AG04449 (cell line): ENCODE measurements at regions of chr1 and their contacts with region 1.

Region 1: GRCh38 chr1:84433258-84434080 is 35.2 kb downstream of the DNASE2B start:
- DNase-seq: peak; percentile 16
- H3K4me3 ChIP-seq: no peak overlapping the region; the same call in 1 of the 2 replicates
- CTCF ChIP-seq: peak; percentile 62

Region 2: DNA sequence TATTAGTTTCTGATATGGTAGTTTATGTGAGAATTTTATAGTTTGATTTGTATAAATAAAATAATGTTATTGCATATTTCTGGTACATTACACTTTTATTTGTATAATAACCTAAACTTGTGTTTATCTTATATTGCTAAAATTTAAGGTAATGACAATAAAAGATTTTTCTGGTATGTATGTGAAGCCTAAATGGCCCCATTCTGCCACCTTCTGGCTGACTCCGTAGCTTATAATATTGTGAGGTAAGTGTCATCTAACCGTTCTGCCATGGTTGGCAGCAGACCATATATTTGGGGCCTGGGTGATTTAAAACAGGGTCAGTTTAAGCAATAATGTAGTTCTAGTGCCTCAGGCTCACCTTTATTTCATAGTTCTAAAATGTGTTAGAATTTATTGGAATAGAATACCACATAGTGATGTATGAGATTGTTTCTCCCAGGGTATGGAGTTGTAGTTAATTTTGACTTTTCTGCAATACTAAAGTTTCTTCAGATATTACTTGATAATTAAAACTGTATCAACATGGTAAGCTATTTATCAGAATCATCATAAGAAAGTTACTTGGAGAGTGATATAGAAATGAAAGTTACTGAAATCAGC is 310.6 kb before region 1 on chr1:
- CTCF ChIA-PET with region 1: interaction called, 41 read pairs
- POLR2A ChIA-PET with region 1: no interaction called
- DNase-seq: no peak
- H3K4me3 ChIP-seq: no peak overlapping the region
- CTCF ChIP-seq: peak; percentile 58

Region 3: GRCh38 chr1:84353695-84354094 is 79.8 kb before region 1 on chr1:
- CTCF ChIA-PET with region 1: no interaction called
- POLR2A ChIA-PET with region 1: no interaction called
- DNase-seq: no peak
- H3K4me3 ChIP-seq: no peak overlapping the region
- CTCF ChIP-seq: no peak

Region 4: DNA sequence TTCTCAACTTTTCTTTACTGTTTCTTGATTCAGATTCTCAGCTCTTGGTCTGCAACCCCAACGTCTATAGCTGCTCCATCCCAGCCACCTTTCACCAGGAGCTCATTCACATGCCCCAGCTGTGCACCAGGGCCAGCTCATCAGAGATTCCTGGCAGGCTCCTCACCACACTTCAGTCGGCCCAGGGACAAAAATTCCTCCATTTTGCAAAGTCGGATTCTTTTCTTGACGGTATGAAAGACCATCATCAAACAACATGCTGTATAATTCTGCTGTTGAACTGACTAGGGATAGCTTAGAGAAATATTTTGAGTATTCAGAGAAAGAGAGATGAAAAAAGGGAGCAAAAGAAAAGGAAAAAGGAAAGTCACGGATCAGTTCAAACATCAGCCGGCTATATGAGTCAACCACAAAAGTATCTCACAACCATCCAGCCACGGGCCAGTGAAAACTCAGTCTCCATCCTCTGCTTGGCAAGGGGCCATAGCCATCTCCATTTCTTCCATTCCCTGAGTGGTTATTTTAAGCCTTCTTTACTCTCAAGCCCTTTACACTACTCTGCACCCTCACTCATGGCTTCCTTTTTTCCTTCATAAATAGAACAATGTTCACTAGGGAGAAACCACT is 21.0 kb before region 1 on chr1:
- CTCF ChIA-PET with region 1: interaction called, 11 read pairs
- POLR2A ChIA-PET with region 1: no interaction called
- DNase-seq: peak; percentile 14
- H3K4me3 ChIP-seq: no peak overlapping the region
- CTCF ChIP-seq: no peak

Region 5: GRCh38 chr1:84476225-84476624 is 42.8 kb after region 1 on chr1:
- CTCF ChIA-PET with region 1: no interaction called
- POLR2A ChIA-PET with region 1: no interaction called
- DNase-seq: no peak
- H3K4me3 ChIP-seq: no peak overlapping the region
- CTCF ChIP-seq: no peak

Region 6: DNA sequence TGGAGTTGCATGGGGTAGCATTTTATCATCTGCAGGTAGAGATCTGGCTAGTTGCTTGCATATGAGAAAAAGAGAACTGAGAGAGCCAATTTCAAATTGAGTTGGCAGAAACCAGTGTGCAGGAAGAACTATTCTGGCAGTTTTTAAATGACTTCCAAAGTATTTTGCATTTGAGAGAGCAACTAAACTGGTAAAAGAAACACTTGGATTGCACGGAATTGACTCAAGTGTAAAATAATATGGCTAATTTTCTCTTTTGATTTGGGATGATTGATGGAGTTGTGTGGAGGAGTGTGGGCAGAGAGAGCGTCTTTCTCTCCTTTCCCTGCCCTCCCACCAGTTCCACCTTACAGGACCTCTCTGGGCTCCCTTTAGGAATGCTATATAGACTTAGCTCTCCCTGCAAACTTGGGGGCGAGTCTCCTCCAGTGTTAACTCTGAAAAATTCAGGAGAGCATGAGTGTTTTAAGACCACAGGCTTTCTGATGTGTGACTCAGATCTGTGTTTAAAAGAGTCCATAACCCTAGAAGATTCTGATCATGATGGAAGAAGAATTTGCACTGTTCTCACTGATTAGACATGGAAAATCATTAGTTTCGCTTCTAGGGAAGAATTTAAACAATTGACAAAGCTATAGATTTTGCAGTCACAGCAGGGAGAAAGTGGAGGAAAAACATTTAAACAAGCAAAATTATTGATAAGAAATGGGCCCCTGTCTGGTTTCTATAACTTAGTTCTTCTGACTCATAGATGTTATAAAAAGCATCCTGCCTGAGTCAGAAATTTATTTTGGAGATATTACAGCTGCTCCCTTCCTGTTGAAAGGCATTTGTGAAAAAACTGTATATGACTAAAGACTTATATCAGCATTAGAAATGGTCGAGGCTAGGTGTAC is 165.6 kb after region 1 on chr1:
- CTCF ChIA-PET with region 1: interaction called, 188 read pairs
- POLR2A ChIA-PET with region 1: no interaction called
- DNase-seq: no peak
- H3K4me3 ChIP-seq: peak overlapping the region; percentile 28
- CTCF ChIP-seq: no peak

Region 7: GRCh38 chr1:84613887-84614286 is 180.4 kb after region 1 on chr1:
- CTCF ChIA-PET with region 1: no interaction called
- POLR2A ChIA-PET with region 1: no interaction called
- DNase-seq: no peak
- H3K4me3 ChIP-seq: no peak overlapping the region
- CTCF ChIP-seq: no peak

Region 8: GRCh38 chr1:84800090-84801073 is 366.9 kb after region 1 on chr1:
- CTCF ChIA-PET with region 1: no interaction called
- POLR2A ChIA-PET with region 1: no interaction called
- DNase-seq: no peak
- H3K4me3 ChIP-seq: no peak overlapping the region
- CTCF ChIP-seq: no peak